Caco-2 (cell line): ENCODE measurements at regions of chr11 and their contacts with region 1.

Region 1: DNA sequence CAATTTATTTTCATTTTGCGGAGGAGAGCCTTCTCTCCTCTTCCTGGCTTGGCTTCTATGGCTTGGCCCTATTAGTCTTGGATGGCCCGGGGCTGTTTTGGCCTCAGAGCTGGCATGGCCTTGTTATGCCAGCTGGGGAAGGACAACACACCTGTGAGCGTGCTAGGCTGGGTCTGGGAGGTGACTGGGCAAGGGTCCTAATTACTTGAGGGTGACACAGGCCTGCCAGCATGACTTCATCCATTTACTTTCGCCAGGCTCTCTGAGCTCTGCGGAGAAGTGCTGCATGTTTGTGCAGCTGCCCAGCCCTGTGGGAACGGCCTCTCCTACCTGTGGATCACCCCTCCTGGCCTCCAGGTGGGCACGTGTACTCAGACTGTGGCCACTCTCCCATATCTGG is 153.6 kb downstream of the SNX19 start:
- DNase-seq: no peak
- H3K4me3 ChIP-seq: no peak overlapping the region
- H3K4me3 Mint-ChIP-seq: no peak overlapping the region
- H3K27ac Mint-ChIP-seq: no peak overlapping the region
- H3K4me1 ChIP-seq: 0 out of 2 replicates have a peak, but pooled peaks cover 3% of the 10 kb centered on the region
- H3K4me1 Mint-ChIP-seq: no peaks in the 10 kb centered on the region
- H3K27me3 ChIP-seq: no peaks in the 10 kb centered on the region
- H3K27me3 Mint-ChIP-seq: peaks cover 20% of the 10 kb centered on the region
- CTCF ChIP-seq: no peak

Region 2: DNA sequence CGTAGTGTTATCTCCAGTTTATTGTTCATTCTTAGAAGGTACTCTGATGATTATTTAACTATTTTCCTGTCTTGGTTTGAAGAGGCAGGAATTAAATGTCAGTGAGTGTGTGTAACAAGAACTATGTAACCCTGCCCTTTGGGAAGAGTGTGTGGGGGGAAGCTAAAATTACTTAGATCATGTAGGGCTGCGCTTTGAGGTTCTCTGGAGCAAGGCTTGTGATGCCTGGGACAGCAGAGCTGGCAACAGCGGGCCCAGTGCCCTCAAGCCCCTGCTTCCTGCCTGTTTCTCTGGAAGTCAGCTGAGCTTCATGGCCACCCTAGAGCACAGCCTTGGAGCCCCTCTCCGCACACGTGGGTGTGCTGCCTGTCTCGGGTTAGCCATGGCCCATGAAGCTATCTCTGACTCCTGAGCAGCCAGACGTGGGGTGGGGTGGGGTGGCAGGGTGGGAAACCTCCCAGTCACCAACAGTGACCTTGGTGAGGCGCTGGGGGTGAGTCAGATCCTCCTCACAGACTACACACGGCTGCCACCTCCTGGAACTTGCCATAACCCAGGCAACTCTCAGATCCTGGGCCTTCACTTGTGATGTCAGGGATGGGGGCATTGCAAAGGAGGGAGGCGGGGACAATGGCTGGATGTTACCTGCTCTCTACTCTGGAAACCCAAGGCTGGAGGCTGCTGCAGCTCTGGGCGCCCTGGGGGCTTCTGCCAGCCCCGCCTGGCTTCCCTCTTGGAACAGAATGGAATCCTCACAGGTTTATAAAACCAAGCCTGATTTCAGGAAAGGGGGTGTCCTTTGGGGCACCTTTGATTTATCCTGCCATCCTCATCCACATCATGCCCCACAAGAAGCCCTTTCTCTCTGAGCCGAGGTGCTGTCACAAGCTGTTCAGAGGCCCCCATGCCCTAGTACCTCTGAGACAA is 65.1 kb after region 1 on chr11:
- CTCF ChIA-PET with region 1: no interaction called
- POLR2A ChIA-PET with region 1: no interaction called
- intact Hi-C with region 1: loop called (anchors 5 kb)
- DNase-seq: peak; percentile 66 to 76
- H3K4me3 ChIP-seq: no peak overlapping the region
- H3K4me3 Mint-ChIP-seq: no peak overlapping the region
- H3K27ac Mint-ChIP-seq: no peak overlapping the region
- H3K4me1 ChIP-seq: no peaks in the 10 kb centered on the region
- H3K4me1 Mint-ChIP-seq: no peaks in the 10 kb centered on the region
- H3K27me3 ChIP-seq: no peaks in the 10 kb centered on the region; the same call in none of the 2 replicates
- H3K27me3 Mint-ChIP-seq: peaks cover 12% of the 10 kb centered on the region
- CTCF ChIP-seq: peak; percentile 42 to 77